WTC11 (cell line): ENCODE measurements at regions of chr6 and their contacts with region 1.

Region 1: GRCh38 chr6:35139908-35140655 is 1.1 kb downstream of the TCP11 start:
- DNase-seq: peak; percentile 39
- ATAC-seq: peak; percentile 25
- H3K4me3 Mint-ChIP-seq: no peak overlapping the region
- H3K27ac Mint-ChIP-seq: no peak overlapping the region
- H3K4me1 Mint-ChIP-seq: peaks cover 9% of the 10 kb centered on the region
- H3K27me3 Mint-ChIP-seq: peaks cover 24% of the 10 kb centered on the region
- CTCF ChIP-seq: peak; percentile 76

Region 2: DNA sequence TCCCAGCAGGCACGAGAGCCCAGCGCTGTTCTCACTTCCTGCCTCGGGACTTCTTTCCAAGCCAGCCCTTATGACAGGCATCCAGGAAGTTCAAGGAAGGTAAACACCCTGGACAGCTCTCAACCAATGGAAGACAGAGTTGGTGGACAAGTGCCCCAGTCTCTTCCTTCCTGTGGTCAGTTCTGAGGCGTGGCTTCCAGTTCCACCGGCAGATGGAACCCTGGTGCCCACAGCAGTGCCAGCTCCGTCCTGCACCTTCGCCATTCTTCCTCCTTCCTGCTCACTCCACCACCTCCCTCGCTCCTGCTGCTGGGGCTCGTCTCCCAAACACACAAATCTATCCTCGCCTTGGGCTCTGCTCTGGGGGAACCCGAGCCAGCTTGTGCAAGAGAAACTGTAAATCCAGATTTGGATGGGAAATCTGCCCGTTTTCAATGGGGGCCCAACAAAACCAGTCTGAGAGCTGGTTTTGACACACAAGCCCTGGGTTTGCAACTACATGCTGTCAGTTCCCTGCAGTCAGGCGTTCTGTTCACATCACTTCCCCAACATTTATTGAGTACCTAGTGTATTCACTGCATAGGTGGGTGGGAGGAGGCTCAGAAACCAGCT is 1156.9 kb before region 1 on chr6:
- CTCF ChIA-PET with region 1: no interaction called
- POLR2A ChIA-PET with region 1: no interaction called
- DNase-seq: no peak
- ATAC-seq: no peak
- H3K4me3 Mint-ChIP-seq: no peak overlapping the region
- H3K27ac Mint-ChIP-seq: no peak overlapping the region
- H3K4me1 Mint-ChIP-seq: peaks cover 17% of the 10 kb centered on the region
- H3K27me3 Mint-ChIP-seq: peaks cover 26% of the 10 kb centered on the region
- CTCF ChIP-seq: no peak

Region 3: DNA sequence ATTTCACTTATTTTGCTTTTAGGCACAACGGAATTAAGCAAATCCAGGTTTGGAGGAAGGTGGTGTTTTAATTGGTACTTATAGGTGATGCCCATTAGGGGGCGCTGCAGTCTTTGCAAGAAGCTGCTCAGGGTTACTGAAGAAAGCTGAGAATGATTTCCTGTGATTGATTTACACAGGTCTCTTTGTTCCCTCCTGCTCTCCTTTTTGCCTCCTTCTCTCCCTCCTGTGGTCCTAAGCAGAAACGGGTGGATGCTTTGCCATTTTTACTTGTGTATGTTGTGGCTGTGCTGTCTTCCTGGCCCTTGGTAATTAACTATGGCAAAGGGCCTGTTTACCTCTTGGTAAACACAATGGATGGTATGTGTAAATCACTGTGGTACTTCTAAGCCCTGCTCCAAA is 153.2 kb before region 1 on chr6:
- CTCF ChIA-PET with region 1: interaction called, 68 read pairs
- POLR2A ChIA-PET with region 1: no interaction called
- DNase-seq: peak; percentile 67
- ATAC-seq: peak; percentile 97
- H3K4me3 Mint-ChIP-seq: no peak overlapping the region
- H3K27ac Mint-ChIP-seq: peak overlapping the region; percentile 83
- H3K4me1 Mint-ChIP-seq: peaks cover 8% of the 10 kb centered on the region
- H3K27me3 Mint-ChIP-seq: no peaks in the 10 kb centered on the region
- CTCF ChIP-seq: peak; percentile 91

Region 4: GRCh38 chr6:35035481-35036030 is 104.5 kb before region 1 on chr6:
- CTCF ChIA-PET with region 1: interaction called, 10 read pairs
- POLR2A ChIA-PET with region 1: no interaction called
- DNase-seq: no peak
- ATAC-seq: no peak
- H3K4me3 Mint-ChIP-seq: no peak overlapping the region
- H3K27ac Mint-ChIP-seq: peak overlapping the region; percentile 97
- H3K4me1 Mint-ChIP-seq: peaks cover 63% of the 10 kb centered on the region
- H3K27me3 Mint-ChIP-seq: no peaks in the 10 kb centered on the region
- CTCF ChIP-seq: no peak

Region 5: GRCh38 chr6:35128496-35128895 is 11.6 kb before region 1 on chr6:
- CTCF ChIA-PET with region 1: interaction called, 18 read pairs
- POLR2A ChIA-PET with region 1: no interaction called
- DNase-seq: no peak
- ATAC-seq: no peak
- H3K4me3 Mint-ChIP-seq: no peak overlapping the region
- H3K27ac Mint-ChIP-seq: no peak overlapping the region
- H3K4me1 Mint-ChIP-seq: no peaks in the 10 kb centered on the region
- H3K27me3 Mint-ChIP-seq: no peaks in the 10 kb centered on the region; the same call in 1 of the 2 replicates
- CTCF ChIP-seq: no peak

Region 6: DNA sequence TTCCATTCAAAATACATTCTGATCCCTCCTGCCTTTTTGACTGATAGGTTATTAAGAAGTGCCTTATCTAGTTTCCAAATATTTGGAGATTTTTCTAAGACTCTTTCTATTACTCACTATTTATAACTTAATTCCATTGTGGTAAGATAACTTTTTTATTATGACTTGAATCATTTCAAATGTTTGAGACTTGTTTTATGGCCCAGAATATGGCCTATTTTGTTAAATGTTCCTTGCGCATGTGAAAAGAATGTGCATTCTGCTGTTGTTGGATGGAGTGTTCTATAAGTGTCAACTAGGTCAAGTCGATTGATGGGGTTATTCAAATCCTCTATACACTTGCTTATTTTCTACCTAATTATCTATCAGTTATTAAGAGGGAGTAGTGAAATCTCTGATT is 14.2 kb after region 1 on chr6:
- CTCF ChIA-PET with region 1: no interaction called
- POLR2A ChIA-PET with region 1: no interaction called
- DNase-seq: no peak
- ATAC-seq: no peak
- H3K4me3 Mint-ChIP-seq: no peak overlapping the region
- H3K27ac Mint-ChIP-seq: no peak overlapping the region
- H3K4me1 Mint-ChIP-seq: no peaks in the 10 kb centered on the region; the same call in 1 of the 2 replicates
- H3K27me3 Mint-ChIP-seq: peaks cover 27% of the 10 kb centered on the region
- CTCF ChIP-seq: no peak